ENCODE measurements at regions of chr1 and their contacts with region 1.

Region 1: GRCh38 chr1:203216274-203217138 is 13.0 kb downstream of the CHIT1 start:
- DNase-seq: peak; percentile 70
- ATAC-seq: peak; percentile 75
- H3K4me3 Mint-ChIP-seq: no peak overlapping the region
- H3K27ac Mint-ChIP-seq: no peak overlapping the region
- H3K4me1 Mint-ChIP-seq: no peaks in the 10 kb centered on the region
- H3K27me3 Mint-ChIP-seq: peaks cover 5% of the 10 kb centered on the region

Region 2: DNA sequence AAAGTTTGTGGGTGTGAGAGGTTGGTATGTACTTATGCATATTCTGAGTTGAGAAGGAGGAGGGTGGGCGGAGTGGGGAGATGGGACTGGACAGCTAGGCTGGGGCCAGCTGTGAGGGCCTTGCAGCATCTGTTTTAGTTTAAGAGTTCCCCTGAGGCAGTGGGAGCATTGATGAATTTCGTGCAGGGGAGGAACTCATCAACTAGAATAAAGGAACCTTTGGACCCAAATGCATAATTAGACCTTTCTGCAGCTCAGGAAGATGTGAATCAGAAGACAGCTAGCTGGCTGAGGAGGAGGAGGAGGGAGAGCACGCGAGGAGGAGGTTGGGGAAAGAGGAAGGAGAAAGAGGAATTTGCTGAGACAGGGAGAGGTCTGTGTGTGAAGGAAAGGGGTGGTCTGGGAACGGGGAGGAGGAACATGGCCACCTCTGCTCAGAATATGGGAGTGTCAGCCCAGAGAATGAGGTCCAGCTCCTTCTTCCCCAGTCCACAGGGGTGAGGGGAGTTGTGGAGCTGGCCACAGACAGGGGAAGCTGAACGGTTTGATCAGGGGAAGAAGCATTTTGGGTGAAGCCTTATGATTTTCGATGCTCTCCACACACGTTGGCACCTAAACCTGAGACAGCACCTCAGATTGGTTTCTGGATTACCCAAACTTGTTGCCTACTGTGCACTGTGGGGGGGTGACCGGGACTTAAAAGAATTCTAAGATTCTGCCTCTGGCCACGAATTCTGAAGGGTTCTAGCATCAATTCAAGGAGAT is 158.4 kb before region 1 on chr1:
- CTCF ChIA-PET with region 1: interaction called, 10 read pairs
- POLR2A ChIA-PET with region 1: no interaction called
- DNase-seq: no peak
- ATAC-seq: no peak
- H3K4me3 Mint-ChIP-seq: no peak overlapping the region
- H3K27ac Mint-ChIP-seq: no peak overlapping the region
- H3K4me1 Mint-ChIP-seq: no peaks in the 10 kb centered on the region
- H3K27me3 Mint-ChIP-seq: no peaks in the 10 kb centered on the region

Region 3: GRCh38 chr1:203117611-203118575 is 98.6 kb before region 1 on chr1:
- CTCF ChIA-PET with region 1: interaction called, 51 read pairs
- POLR2A ChIA-PET with region 1: no interaction called
- DNase-seq: peak; percentile 54
- ATAC-seq: peak; percentile 80
- H3K4me3 Mint-ChIP-seq: no peak overlapping the region
- H3K27ac Mint-ChIP-seq: no peak overlapping the region
- H3K4me1 Mint-ChIP-seq: peaks cover 16% of the 10 kb centered on the region
- H3K27me3 Mint-ChIP-seq: peaks cover 43% of the 10 kb centered on the region

Region 4: GRCh38 chr1:203172128-203173010 is 44.1 kb before region 1 on chr1:
- CTCF ChIA-PET with region 1: interaction called, 13 read pairs
- POLR2A ChIA-PET with region 1: no interaction called
- DNase-seq: peak; percentile 65
- ATAC-seq: peak; percentile 74
- H3K4me3 Mint-ChIP-seq: no peak overlapping the region
- H3K27ac Mint-ChIP-seq: no peak overlapping the region
- H3K4me1 Mint-ChIP-seq: no peaks in the 10 kb centered on the region
- H3K27me3 Mint-ChIP-seq: no peaks in the 10 kb centered on the region

Region 5: GRCh38 chr1:203202431-203203245 is 13.9 kb before region 1 on chr1:
- CTCF ChIA-PET with region 1: interaction called, 20 read pairs
- POLR2A ChIA-PET with region 1: no interaction called
- DNase-seq: no peak
- ATAC-seq: no peak
- H3K4me3 Mint-ChIP-seq: no peak overlapping the region
- H3K27ac Mint-ChIP-seq: no peak overlapping the region
- H3K4me1 Mint-ChIP-seq: peaks cover 5% of the 10 kb centered on the region
- H3K27me3 Mint-ChIP-seq: peaks cover 7% of the 10 kb centered on the region

Measured in activated CD8-positive, alpha-beta T cell treated with anti-CD3 and anti-CD28 coated beads, Interleukin-2, amount 10 ng/mL, durations not matched to agents 7 days and 5 days (primary cell).